ENCODE measurements at regions of chr22 and their contacts with region 1.

Region 1: GRCh38 chr22:24423519-24424000 is 3.8 kb upstream of the ADORA2A start:
- DNase-seq: no peak
- ATAC-seq: peak; percentile 64
- H3K4me3 ChIP-seq: peak overlapping the region; percentile 77; the same call in 1 of the 2 replicates
- H3K27ac ChIP-seq: no peak overlapping the region
- H3K4me1 ChIP-seq: peaks cover 19% of the 10 kb centered on the region
- H3K27me3 ChIP-seq: no peaks in the 10 kb centered on the region
- CTCF ChIP-seq: peak; percentile 62 to 86 (median 69); a peak in 5 of 6 replicates
- EP300 ChIP-seq: no peak
- POLR2A ChIP-seq: no peak; the same call in 1 of the 2 replicates
- RAD21 ChIP-seq: peak; percentile 73

Region 2: DNA sequence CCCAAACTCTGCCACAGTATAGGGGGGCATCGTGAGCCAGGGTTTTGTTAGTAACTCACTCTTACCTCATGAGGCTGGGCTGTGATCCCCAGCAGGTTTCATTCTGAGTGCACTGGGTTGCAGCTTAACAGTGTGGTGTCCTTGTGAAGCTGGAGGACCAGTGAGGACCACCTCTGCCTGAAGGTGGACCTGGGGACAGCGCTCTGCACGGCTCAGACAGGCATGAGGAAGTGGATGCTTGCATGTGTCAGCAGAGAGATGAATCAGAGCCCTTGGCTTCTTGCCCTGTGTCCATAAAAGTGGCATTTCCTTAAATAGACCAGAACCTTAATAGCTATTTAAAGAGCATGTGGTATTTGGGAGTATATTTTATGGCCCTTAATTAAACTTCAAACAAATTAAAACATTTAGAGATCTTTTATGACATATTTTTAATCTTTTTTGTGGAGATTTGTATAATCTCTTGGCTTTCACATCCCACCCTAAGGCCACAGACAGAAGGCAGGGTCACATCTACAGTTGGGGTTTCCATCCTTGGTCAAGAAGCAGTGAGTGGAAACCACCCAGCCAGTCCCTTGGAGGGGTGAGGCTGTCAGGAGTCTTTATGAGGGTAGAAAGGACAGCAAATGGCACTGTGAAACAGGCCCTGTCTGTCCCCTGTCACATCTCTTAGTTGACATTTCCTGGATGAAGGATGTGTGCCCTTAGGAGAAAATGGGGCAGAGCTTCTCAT is 20.9 kb before region 1 on chr22:
- CTCF ChIA-PET with region 1: interaction called, 9 read pairs
- POLR2A ChIA-PET with region 1: interaction called, 6 read pairs
- RAD21 ChIA-PET with region 1: interaction called, 13 read pairs
- SMC1A ChIA-PET with region 1: interaction called, 4 read pairs
- in situ Hi-C with region 1: no loop called
- intact Hi-C with region 1: no loop called
- DNase-seq: peak; percentile 33
- ATAC-seq: peak; percentile 67
- H3K4me3 ChIP-seq: no peak overlapping the region
- H3K27ac ChIP-seq: peak overlapping the region; percentile 85
- H3K4me1 ChIP-seq: peaks cover 44% of the 10 kb centered on the region
- H3K27me3 ChIP-seq: no peaks in the 10 kb centered on the region
- CTCF ChIP-seq: no peak
- EP300 ChIP-seq: peak; percentile 8 to 23; a peak in 2 of 4 replicates
- POLR2A ChIP-seq: no peak
- RAD21 ChIP-seq: no peak

Region 3: GRCh38 chr22:24516301-24516737 is 92.8 kb after region 1 on chr22:
- CTCF ChIA-PET with region 1: interaction called, 71 read pairs
- POLR2A ChIA-PET with region 1: interaction called, 7 read pairs
- RAD21 ChIA-PET with region 1: interaction called, 23 read pairs
- SMC1A ChIA-PET with region 1: interaction called, 25 read pairs
- in situ Hi-C with region 1: no loop called
- intact Hi-C with region 1: no loop called
- DNase-seq: no peak
- ATAC-seq: peak; percentile 66
- H3K4me3 ChIP-seq: no peak overlapping the region
- H3K27ac ChIP-seq: no peak overlapping the region; the same call in 1 of the 2 replicates
- H3K4me1 ChIP-seq: peaks cover 41% of the 10 kb centered on the region
- H3K27me3 ChIP-seq: no peaks in the 10 kb centered on the region
- CTCF ChIP-seq: no peak
- EP300 ChIP-seq: no peak
- POLR2A ChIP-seq: no peak
- RAD21 ChIP-seq: no peak